ENCODE measurements at regions of chr4 and their contacts with region 1.

Region 1: GRCh38 chr4:84750253-84750959 is 167.5 kb downstream of the CDS1 start:
- DNase-seq: no peak
- ATAC-seq: peak; percentile 46 to 78 (median 62)
- H3K4me3 ChIP-seq: no peak overlapping the region
- H3K27ac ChIP-seq: no peak overlapping the region
- H3K4me1 ChIP-seq: peaks cover 0 to 33% (median 10%) of the 10 kb centered on the region in 9 donors
- H3K27me3 ChIP-seq: no peaks in the 10 kb centered on the region
- CTCF ChIP-seq: peak; percentile 31 to 81 (median 66)

Region 2: GRCh38 chr4:84973856-84974255 is 223.4 kb after region 1 on chr4:
- intact Hi-C with region 1: loop called (anchors 1 to 10 kb)
- DNase-seq: no peak
- ATAC-seq: no peak
- H3K4me3 ChIP-seq: no peak overlapping the region
- H3K27ac ChIP-seq: no peak overlapping the region
- H3K4me1 ChIP-seq: peaks cover 0 to 19% (median 4%) of the 10 kb centered on the region in 9 donors
- H3K27me3 ChIP-seq: no peaks in the 10 kb centered on the region
- CTCF ChIP-seq: no peak

Measured in heart right ventricle (tissue), 16 donors.